HCT116 (cell line): ENCODE measurements at regions of chr6 and their contacts with region 1.

Region 1: GRCh38 chr6:24855395-24856245 is 56.9 kb upstream of the ARMH2 start:
- DNase-seq: peak; percentile 54
- ATAC-seq: peak; percentile 94
- H3K4me3 ChIP-seq: peak overlapping the region; percentile 2 to 39
- H3K27ac ChIP-seq: no peak overlapping the region
- H3K4me1 ChIP-seq: peaks cover 3 to 10% of the 10 kb centered on the region in 2 experiments; a peak in 2 of 4 replicates
- H3K27me3 ChIP-seq: peaks cover 1% of the 10 kb centered on the region; the same call in 1 of the 2 replicates
- CTCF ChIP-seq: peak; percentile 79 to 85 (median 85)
- POLR2A ChIP-seq: no peak
- RAD21 ChIP-seq: peak; percentile 90

Region 2: DNA sequence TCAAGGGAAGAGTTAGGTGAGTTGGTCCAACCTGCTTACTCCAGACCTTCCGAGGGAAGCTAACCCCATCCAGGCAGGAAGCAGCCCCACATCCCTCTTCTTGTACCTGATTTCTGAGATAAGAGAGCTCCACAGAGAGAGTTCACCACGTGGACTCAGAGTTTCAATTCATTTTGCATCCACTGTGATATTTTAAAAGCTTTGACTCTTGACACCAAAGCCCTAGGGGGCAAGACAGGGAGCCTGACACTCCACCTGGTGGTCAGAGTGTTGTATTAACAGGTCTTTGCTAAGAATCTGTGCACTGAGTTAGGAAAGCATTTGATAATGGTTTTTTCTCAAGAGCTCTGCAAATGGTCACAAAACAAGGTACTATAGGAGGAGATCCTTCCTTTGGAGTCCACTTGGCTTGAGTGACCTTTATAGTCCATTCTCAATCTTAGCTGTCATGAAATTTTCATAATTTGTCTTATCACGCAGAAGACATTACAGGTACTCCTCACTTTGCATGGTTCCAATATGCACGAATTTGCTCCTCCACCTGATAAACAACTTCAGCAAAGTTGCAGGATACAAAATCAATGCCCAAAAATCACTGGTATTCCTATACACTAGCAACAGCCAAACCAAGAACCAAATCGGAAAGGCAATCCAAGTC is 136.3 kb after region 1 on chr6:
- CTCF ChIA-PET with region 1: interaction called, 59 read pairs
- POLR2A ChIA-PET with region 1: no interaction called
- RAD21 ChIA-PET with region 1: no interaction called
- intact Hi-C with region 1: loop called (anchors 1 kb)
- DNase-seq: peak; percentile 42
- ATAC-seq: peak; percentile 91
- H3K4me3 ChIP-seq: no peak overlapping the region
- H3K27ac ChIP-seq: no peak overlapping the region
- H3K4me1 ChIP-seq: no peaks in the 10 kb centered on the region
- H3K27me3 ChIP-seq: no peaks in the 10 kb centered on the region
- CTCF ChIP-seq: peak; percentile 59 to 81 (median 70)
- POLR2A ChIP-seq: no peak
- RAD21 ChIP-seq: peak; percentile 64

Region 3: GRCh38 chr6:25147223-25147622 is 291.6 kb after region 1 on chr6:
- CTCF ChIA-PET with region 1: no interaction called
- POLR2A ChIA-PET with region 1: no interaction called
- RAD21 ChIA-PET with region 1: no interaction called
- intact Hi-C with region 1: no loop called
- DNase-seq: no peak
- ATAC-seq: no peak
- H3K4me3 ChIP-seq: no peak overlapping the region
- H3K27ac ChIP-seq: no peak overlapping the region
- H3K4me1 ChIP-seq: no peaks in the 10 kb centered on the region
- H3K27me3 ChIP-seq: no peaks in the 10 kb centered on the region
- CTCF ChIP-seq: no peak
- POLR2A ChIP-seq: no peak
- RAD21 ChIP-seq: no peak

Region 4: GRCh38 chr6:25601800-25602673 is 746.4 kb after region 1 on chr6:
- CTCF ChIA-PET with region 1: no interaction called
- POLR2A ChIA-PET with region 1: no interaction called
- RAD21 ChIA-PET with region 1: no interaction called
- intact Hi-C with region 1: loop called (anchors 5 kb)
- DNase-seq: peak; percentile 28
- ATAC-seq: no peak; the same call in 1 of the 2 replicates
- H3K4me3 ChIP-seq: no peak overlapping the region
- H3K27ac ChIP-seq: no peak overlapping the region
- H3K4me1 ChIP-seq: no peaks in the 10 kb centered on the region
- H3K27me3 ChIP-seq: no peaks in the 10 kb centered on the region
- CTCF ChIP-seq: peak; percentile 28 to 75 (median 67); a peak in 4 of 6 replicates
- POLR2A ChIP-seq: no peak
- RAD21 ChIP-seq: peak; percentile 74